Sigmoid colon (tissue), 7 donors: ENCODE measurements at regions of chrX and their contacts with region 1.

Region 1: DNA sequence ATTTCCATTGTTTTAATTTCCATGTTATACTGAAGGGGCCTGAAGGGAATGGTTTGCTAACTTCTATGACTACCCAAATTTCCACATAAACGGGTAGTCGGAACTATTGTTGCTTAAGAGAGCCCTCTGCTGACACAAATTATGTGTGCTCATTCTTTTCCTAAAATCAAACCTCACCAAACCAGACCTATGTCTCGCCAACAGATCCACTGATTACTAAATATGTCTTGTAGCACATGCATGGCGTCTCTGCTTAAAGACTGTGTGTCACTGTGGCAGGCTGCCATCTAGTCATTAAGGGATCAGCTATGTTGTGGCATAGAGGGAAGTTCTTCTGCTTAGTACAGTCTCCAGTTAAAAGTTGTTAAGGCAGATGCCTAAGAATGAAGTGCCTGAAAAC is 25.1 kb downstream of the PIR start:
- DNase-seq: no peak
- H3K4me3 ChIP-seq: no peak overlapping the region
- H3K27ac ChIP-seq: no peak overlapping the region
- H3K4me1 ChIP-seq: peaks cover 0 to 4% (median 0%) of the 10 kb centered on the region in 4 donors
- H3K27me3 ChIP-seq: no peaks in the 10 kb centered on the region
- CTCF ChIP-seq: peak; percentile 12 to 24 (median 17)
- EP300 ChIP-seq: no peak
- POLR2A ChIP-seq: no peak

Region 2: DNA sequence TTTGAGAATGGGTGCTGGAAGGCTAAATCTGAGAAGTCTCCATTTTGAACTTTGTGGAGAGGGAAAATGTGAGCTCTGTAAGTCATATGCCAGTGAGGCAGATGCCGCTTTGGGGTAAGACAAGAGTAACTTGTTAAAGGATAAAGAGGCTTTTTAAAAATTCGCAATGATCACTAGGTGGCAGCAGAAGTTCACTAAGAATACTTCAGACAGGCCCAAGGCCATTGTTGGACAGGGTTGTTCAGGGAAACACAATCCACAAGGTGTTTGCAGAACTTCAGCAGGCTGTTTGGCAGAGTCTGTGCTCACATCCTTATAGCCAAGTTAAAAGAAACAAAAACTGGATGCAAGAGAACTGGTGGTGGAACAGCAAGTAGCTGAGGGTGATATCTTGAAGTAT is 119.0 kb before region 1 on chrX:
- intact Hi-C with region 1: loop called (anchors 1 kb)
- DNase-seq: no peak
- H3K4me3 ChIP-seq: no peak overlapping the region
- H3K27ac ChIP-seq: no peak overlapping the region
- H3K4me1 ChIP-seq: no peaks in the 10 kb centered on the region
- H3K27me3 ChIP-seq: no peaks in the 10 kb centered on the region
- CTCF ChIP-seq: peak in 3 of 4 experiments; percentile 12 to 48 (median 26)
- EP300 ChIP-seq: no peak
- POLR2A ChIP-seq: no peak

Region 3: GRCh38 chrX:15366506-15367352 is 101.3 kb before region 1 on chrX:
- intact Hi-C with region 1: no loop called
- DNase-seq: no peak
- H3K4me3 ChIP-seq: no peak overlapping the region
- H3K27ac ChIP-seq: no peak overlapping the region
- H3K4me1 ChIP-seq: no peaks in the 10 kb centered on the region
- H3K27me3 ChIP-seq: no peaks in the 10 kb centered on the region
- CTCF ChIP-seq: no peak
- EP300 ChIP-seq: no peak
- POLR2A ChIP-seq: no peak